ENCODE measurements at regions of chr2 and their contacts with region 1.

Region 1: GRCh38 chr2:55050133-55050994 is at the start of gene RTN4:
- DNase-seq: peak; percentile 97
- CTCF ChIP-seq: no peak

Region 2: DNA sequence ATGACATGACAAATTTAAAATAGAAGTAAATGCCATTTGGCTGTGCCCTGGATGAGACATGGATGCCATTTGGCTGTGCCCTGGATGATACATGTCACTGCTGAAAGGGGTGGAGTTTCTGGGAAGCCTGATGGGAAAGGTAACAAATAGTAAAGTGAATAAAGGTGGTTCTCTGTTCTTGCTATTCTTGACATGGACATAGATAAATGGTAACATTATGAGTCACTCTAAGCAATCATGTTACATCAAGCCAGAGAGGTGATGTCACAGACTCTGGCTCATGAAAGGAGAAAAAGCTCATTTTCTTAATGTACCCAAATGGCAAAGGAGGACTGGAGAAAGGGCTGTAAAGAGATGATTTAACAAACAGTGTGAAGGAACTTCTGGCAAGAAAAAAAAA is 240.5 kb before region 1 on chr2:
- CTCF ChIA-PET with region 1: no interaction called
- POLR2A ChIA-PET with region 1: no interaction called
- DNase-seq: no peak
- CTCF ChIP-seq: no peak

Region 3: GRCh38 chr2:55033066-55033742 is 17.2 kb before region 1 on chr2:
- CTCF ChIA-PET with region 1: interaction called, 17 read pairs
- POLR2A ChIA-PET with region 1: interaction called, 4 read pairs
- DNase-seq: peak; percentile 41
- CTCF ChIP-seq: no peak

Region 4: GRCh38 chr2:55038428-55038827 is 11.9 kb before region 1 on chr2:
- CTCF ChIA-PET with region 1: interaction called, 17 read pairs
- POLR2A ChIA-PET with region 1: interaction called, 5 read pairs
- DNase-seq: no peak
- CTCF ChIP-seq: no peak

Region 5: GRCh38 chr2:55196506-55196905 is 146.1 kb after region 1 on chr2:
- CTCF ChIA-PET with region 1: no interaction called
- POLR2A ChIA-PET with region 1: no interaction called
- DNase-seq: no peak
- CTCF ChIP-seq: no peak

Measured in GM10248 (cell line).